MCF 10A (cell line): ENCODE measurements at regions of chr3 and their contacts with region 1.

Region 1: DNA sequence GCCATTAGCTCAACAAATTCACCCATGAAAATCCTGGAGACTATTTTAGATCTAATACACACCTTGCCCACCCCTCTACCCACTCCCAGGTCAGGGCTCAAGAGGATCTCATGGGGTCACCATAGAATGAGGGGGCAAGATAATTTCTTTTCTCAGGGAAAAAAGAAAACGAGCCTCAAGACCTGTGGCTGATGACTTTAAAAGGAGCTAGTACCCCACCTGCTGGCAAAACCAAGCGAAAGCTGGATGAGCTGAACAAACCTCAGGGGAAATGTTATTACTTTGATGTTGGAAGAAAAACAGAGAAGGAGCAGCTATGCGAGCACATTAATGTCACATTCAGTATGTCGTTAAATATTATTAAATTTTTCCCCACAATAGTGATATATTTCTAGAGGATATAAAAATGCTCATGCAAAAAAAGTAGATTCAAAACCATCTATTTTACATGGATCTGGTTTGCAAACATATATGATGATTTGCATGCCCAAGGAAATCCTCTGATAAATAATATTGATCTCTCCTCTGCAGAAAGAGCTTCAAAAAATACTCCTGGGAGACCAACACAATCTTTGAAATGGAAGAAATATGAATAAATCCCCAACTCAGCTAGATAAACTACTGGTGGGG is 37.7 kb downstream of the PLD1 start:
- DNase-seq: peak; percentile 78
- H3K4me3 Mint-ChIP-seq: no peak overlapping the region
- H3K27ac Mint-ChIP-seq: no peak overlapping the region
- H3K4me1 Mint-ChIP-seq: peaks cover 25% of the 10 kb centered on the region
- H3K27me3 Mint-ChIP-seq: no peaks in the 10 kb centered on the region
- CTCF ChIP-seq: peak; percentile 70

Region 2: DNA sequence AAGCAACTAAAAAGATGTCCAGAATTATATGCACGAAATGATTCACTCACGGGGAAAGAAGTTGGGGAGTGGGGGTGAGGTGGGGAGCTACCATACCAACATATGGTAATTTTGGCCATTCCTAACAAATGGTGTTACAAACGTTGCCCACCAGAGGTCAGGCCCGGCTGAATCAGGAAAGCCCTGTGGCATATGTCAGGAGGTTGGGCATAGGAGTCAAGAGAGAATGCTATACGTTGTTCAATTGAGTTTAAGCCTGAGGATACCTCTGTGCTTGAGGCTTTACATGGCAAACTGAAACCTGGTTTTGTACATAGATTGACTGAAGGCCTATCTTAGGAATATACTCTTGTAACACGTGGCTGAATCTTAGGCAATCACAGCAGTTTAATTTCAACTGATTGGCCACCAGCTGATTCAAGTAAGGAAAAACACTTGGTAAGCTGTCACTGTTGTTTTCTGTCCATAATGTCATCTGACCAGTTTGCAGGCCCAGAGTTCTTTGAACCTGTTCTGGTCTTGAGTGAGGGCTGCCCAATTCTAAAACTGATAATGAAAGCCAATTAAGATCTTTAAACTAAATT is 722.6 kb before region 1 on chr3:
- CTCF ChIA-PET with region 1: interaction called, 4 read pairs
- POLR2A ChIA-PET with region 1: no interaction called
- intact Hi-C with region 1: loop called (anchors 10 kb)
- DNase-seq: peak; percentile 77
- H3K4me3 Mint-ChIP-seq: no peak overlapping the region
- H3K27ac Mint-ChIP-seq: peak overlapping the region; percentile 11
- H3K4me1 Mint-ChIP-seq: peaks cover 8% of the 10 kb centered on the region
- H3K27me3 Mint-ChIP-seq: no peaks in the 10 kb centered on the region
- CTCF ChIP-seq: peak; percentile 79

Region 3: GRCh38 chr3:171646357-171647133 is 126.0 kb before region 1 on chr3:
- CTCF ChIA-PET with region 1: interaction called, 130 read pairs
- POLR2A ChIA-PET with region 1: interaction called, 14 read pairs
- intact Hi-C with region 1: loop called (anchors 1 kb)
- DNase-seq: peak; percentile 55
- H3K4me3 Mint-ChIP-seq: no peak overlapping the region
- H3K27ac Mint-ChIP-seq: no peak overlapping the region
- H3K4me1 Mint-ChIP-seq: no peaks in the 10 kb centered on the region
- H3K27me3 Mint-ChIP-seq: no peaks in the 10 kb centered on the region
- CTCF ChIP-seq: peak; percentile 73

Region 4: DNA sequence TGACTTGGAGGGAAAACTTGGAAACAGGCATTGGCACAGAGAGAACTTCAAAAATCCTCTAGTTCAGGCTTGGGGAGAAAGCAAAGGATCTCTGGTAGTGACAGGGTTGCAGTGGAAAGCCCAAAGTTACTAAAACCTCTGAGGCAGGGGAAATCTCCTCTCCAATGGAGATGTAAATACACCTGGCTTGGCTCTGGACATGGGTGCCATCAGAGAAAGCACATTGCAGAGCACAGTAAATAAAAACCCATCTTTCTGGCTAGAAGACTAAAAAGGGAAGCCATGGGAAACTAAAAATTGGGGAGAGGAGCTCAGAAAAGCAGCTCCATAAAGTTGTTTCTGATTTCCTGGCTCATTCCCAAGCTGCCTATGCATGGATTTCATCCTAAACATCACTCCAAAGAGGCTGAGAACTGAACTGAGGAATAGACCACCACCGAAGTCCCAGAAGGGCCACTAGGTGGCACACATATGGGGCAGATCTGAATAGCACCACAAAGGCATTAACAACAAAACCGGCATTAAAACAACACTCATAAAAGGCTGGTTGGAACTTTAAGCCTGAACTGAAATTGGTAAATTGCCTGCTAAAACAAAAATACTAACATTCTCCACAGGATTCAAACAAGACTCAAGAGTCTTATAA is 68.7 kb before region 1 on chr3:
- CTCF ChIA-PET with region 1: interaction called, 44 read pairs
- POLR2A ChIA-PET with region 1: interaction called, 5 read pairs
- intact Hi-C with region 1: loop called (anchors 1 kb)
- DNase-seq: peak; percentile 58
- H3K4me3 Mint-ChIP-seq: no peak overlapping the region
- H3K27ac Mint-ChIP-seq: no peak overlapping the region
- H3K4me1 Mint-ChIP-seq: no peaks in the 10 kb centered on the region
- H3K27me3 Mint-ChIP-seq: no peaks in the 10 kb centered on the region
- CTCF ChIP-seq: peak; percentile 44

Region 5: DNA sequence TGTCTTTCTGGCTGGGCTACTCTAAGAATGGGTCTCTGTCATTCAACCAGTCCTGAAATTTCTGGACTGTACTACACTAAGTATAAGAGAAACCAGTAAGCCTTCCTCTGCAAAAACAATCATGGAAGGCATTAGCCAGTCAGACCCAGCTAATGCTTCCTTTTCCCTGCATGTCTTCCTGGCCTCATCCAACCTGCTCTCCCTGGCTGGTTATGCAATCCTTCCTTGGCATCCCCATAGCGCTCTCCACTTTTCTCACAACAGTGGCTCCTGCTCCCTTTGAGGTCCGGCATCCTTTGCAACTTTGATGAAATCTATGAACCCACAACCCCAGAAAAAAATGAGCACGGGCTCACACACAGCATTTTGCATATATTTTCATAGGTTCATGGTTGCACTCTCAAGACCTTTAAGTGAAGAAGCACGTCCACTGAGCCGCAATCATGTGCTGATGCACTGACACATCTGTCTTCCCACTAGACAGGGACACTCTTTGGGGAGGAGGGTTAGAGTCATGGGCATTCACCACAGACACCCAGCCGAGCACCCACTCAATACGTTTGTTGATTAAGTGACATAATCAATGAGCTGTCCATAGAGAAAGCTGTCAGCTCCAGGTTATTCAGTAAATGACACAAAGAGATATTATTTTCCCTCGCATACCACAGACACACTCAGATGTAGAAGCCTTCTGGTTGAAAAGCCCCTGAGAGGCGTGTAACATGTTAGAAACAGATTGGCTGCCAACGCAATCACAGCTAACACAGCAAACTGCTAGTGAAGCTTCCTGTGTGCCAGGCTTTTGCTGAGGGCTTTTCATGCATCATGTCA is 29.0 kb before region 1 on chr3:
- CTCF ChIA-PET with region 1: interaction called, 11 read pairs
- POLR2A ChIA-PET with region 1: interaction called, 3 read pairs
- intact Hi-C with region 1: no loop called
- DNase-seq: no peak
- H3K4me3 Mint-ChIP-seq: no peak overlapping the region
- H3K27ac Mint-ChIP-seq: no peak overlapping the region
- H3K4me1 Mint-ChIP-seq: no peaks in the 10 kb centered on the region
- H3K27me3 Mint-ChIP-seq: no peaks in the 10 kb centered on the region
- CTCF ChIP-seq: no peak

Region 6: GRCh38 chr3:171788546-171789351 is 16.2 kb after region 1 on chr3:
- CTCF ChIA-PET with region 1: interaction called, 24 read pairs
- POLR2A ChIA-PET with region 1: interaction called, 12 read pairs
- intact Hi-C with region 1: no loop called
- DNase-seq: peak; percentile 88
- H3K4me3 Mint-ChIP-seq: no peak overlapping the region
- H3K27ac Mint-ChIP-seq: peak overlapping the region; percentile 61
- H3K4me1 Mint-ChIP-seq: peaks cover 27% of the 10 kb centered on the region
- H3K27me3 Mint-ChIP-seq: no peaks in the 10 kb centered on the region
- CTCF ChIP-seq: no peak

Region 7: GRCh38 chr3:171809821-171810628 is 37.5 kb after region 1 on chr3 and contains the start of gene PLD1:
- CTCF ChIA-PET with region 1: interaction called, 5 read pairs
- POLR2A ChIA-PET with region 1: interaction called, 38 read pairs
- intact Hi-C with region 1: loop called (anchors 2 kb)
- DNase-seq: peak; percentile 90
- H3K4me3 Mint-ChIP-seq: peak within 1 kb of the TSS; percentile 87
- H3K27ac Mint-ChIP-seq: peak within 1 kb of the TSS; percentile 98
- H3K4me1 Mint-ChIP-seq: peaks cover 38% of the 10 kb centered on the region
- H3K27me3 Mint-ChIP-seq: no peaks in the 10 kb centered on the region
- CTCF ChIP-seq: no peak
- total RNA-seq, gene PLD1: 8.0 and 14.8 TPM in 2 replicates

Region 8: DNA sequence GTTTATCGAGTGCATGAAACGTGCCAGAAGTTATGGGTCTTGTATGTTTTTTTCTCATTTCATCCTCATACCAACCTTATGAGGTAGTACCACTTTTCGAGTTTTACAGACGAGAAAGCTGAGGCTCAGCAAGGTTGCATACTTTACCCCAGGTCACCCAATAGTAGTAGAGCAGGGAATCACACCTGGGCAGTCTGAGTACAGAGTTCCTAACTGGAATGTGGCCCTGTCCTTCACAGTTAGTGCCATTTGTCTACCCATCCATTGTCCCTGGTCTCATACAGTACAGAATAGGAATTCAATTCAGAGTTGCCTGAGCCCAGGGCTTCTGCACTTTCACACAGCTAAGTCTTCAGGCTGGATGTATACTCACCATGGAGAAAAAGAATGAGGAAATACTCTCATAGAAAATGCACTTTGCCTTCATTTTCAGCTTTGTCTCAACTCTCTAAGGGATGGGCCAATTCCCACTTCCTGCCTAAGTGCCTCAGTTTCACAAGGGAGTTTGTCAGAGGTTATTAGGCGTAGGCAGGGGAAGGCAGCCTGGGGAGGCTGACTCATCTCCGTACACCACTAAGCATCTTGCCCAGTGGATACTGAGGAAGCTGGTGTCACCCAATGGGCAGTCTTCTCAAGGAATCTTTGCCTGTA is 163.8 kb after region 1 on chr3:
- CTCF ChIA-PET with region 1: no interaction called
- POLR2A ChIA-PET with region 1: no interaction called
- intact Hi-C with region 1: no loop called
- DNase-seq: peak; percentile 75
- H3K4me3 Mint-ChIP-seq: no peak overlapping the region
- H3K27ac Mint-ChIP-seq: no peak overlapping the region
- H3K4me1 Mint-ChIP-seq: peaks cover 4% of the 10 kb centered on the region
- H3K27me3 Mint-ChIP-seq: no peaks in the 10 kb centered on the region
- CTCF ChIP-seq: no peak